ENCODE measurements at regions of chr16 and their contacts with region 1.

Region 1: DNA sequence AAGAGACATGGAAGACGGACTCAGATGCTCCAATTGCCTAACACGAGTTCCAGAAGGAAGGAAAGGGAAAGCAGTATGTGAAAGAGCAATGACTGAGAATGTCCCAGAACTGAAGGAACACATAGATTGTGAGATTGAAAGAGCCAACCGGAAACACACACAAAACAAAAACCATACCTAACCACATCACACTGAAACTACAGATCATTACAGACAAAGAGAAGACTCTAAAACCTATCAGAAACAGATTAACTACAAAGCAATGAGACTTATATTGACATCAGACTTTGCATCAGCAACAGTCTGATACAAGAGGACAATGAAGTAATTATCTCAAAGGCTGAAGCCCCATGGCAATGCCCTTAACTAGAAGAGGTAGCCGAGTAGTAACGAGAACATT is 45.6 kb upstream of the CLEC18B start:
- DNase-seq: no peak
- ATAC-seq: no peak

Region 2: DNA sequence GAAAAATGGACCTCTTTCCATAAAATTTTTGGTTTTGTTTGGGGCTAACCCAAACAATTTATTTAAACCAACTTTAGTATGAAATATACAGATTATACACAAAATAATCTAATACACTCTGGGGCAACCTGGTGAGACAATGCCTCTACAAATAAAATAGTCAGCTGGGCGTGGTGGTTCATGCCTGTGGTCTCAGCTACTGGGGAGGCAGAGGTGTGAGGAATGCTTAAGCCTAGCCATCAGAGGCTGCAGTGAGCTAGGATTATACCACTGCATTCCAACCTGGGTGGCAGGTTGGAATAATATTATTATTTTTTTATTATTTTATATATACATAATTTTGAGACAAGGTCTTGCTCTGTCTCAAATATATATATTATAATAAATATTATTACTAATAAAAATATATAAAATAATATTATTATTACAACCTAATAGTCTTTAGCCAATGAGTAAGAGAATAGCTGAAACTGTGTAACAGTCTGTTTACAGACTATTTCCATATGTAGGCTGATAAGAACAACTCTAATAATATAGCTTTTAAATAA is 89.6 kb after region 1 on chr16:
- intact Hi-C with region 1: no loop called
- DNase-seq: no peak
- ATAC-seq: no peak

Region 3: DNA sequence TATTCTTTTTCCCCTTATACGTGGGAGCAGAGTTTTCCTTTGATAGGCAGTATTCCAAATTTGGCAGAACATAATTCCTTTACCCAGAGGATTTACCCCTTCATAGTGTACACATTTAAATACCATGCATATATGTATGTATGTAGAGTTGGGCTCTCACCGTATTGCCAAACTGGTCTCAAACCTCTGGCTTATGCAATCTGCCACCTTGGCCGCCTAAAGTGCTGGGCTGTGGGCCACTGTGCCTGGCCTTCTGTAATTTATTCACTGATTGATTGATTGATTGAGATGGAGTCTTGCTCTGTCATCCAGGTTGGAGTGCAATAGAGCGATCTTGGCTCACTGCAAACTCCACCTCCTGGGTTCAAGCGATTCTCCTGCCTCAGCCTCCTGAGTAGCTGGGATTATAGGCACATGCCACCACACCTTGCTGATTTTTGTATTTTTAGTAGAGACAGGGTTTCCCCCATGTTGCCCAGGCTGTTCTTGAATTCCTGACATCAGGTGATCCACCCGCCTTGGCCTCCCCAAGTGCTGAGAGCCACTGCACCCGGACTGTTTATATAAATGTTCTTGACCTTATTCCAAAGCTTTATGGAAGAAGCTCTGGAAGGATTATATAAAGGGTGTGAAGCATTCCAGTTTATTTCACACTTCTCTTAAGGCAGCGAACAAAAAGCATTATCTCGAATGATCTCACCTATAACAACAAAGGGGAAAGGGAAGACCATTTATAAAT is 125.2 kb after region 1 on chr16:
- intact Hi-C with region 1: no loop called
- DNase-seq: no peak
- ATAC-seq: no peak

Region 4: DNA sequence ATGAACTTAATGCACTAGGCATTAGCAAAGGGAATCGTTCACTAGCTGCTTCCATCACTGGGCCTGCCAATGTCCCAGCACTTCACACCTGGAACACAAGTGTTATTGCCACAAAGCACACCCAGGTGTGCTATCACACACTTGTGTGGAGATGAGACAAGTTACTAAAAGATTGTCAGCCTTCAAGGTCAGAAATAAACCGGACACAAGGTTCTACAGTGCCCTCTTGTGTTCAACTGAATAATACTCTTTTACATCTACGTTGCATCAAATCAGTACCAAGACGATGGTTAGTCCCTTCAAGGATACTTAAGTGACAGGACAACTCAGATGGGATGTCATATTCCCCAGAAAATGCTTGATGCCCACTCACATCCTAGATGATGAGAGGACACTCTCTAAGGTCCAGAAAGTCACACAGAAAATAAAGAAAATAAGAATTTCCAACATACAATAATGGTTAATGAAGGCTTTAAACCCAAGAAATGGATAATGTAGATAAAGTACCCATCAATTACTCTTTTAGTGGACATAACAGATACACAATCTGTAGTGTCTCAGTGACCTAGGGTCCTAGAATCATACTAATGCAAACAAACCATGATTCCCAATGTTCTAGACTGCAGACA is 156.5 kb after region 1 on chr16:
- intact Hi-C with region 1: loop called (anchors 10 kb)
- DNase-seq: no peak
- ATAC-seq: peak; percentile 60

Region 5: DNA sequence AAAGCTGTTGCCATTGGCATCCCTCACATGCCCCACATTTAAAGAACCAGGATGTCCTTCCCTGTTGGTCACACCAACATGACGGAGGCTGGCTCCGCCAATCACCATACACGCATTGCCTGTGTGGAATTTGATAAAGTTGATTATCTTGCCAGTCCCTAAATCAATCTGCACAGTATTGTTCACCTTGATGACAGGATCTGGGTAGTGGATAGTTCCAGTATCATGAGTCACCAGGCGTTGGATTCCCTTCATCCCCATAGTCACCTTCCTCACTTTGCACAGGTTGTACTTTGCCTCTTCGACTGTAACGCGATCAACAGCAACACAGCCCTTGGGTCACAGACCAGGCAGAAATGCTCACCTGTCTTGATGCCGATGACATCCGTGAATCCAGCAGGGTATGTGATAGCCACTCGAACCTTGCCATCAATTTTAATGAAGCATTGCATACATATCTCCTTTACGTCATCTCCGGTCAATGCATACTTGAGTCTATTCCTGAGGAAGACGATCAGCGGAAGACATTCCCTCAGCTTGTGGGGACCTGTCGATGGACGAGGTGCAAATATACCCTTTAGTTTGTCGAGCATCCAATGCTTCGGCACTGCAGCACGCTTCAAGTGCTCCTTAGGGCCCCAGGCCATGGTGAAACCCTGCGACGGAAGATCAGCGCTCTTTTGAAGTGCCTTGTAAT is 725.9 kb after region 1 on chr16:
- intact Hi-C with region 1: no loop called
- DNase-seq: no peak
- ATAC-seq: no peak